Naive thymus-derived CD4-positive, alpha-beta T cell (primary cell): ENCODE measurements at regions of chr6 and their contacts with region 1.

Region 1: DNA sequence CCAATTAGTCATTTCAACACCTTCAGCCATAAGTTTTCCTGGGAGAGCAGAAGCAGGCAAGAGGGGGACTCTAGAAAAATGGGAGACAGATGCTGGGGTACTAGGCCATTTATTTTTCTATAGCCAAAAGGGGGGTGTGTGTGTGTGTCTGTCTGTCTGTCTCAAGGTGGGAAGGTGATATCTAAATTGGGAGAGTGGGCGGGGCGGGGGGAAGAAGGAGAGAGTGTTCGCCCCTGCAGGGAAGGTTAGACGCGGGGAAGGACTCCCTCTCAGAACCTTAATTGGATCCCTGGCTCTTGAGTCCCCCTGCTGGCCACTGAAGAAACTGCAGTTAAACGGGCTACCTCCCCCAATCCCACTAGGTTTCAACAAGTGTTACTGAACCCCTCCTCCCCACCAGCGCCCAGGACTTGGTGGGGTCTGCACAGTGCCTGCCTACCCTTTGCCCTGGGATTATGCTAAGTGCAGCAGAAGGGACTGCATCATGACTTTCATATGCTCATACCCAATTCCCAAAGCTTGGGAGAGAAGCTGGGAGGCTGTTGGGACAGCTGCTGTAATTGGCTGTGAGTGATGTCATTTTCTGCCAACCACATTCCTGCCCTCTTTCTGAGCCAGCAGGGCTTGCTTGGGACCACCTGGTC is 45.8 kb downstream of the FOXP4 start:
- DNase-seq: peak; percentile 48 to 79 (median 71)
- ATAC-seq: peak; percentile 81
- H3K4me3 ChIP-seq: no peak overlapping the region
- H3K4me3 Mint-ChIP-seq: no peak overlapping the region
- H3K27ac ChIP-seq: no peak overlapping the region
- H3K27ac Mint-ChIP-seq: no peak overlapping the region
- H3K4me1 ChIP-seq: peaks cover 0 to 5% of the 10 kb centered on the region in 2 donors
- H3K4me1 Mint-ChIP-seq: peaks cover 0 to 4% (median 0%) of the 10 kb centered on the region in 7 donors
- H3K27me3 ChIP-seq: no peaks in the 10 kb centered on the region
- H3K27me3 Mint-ChIP-seq: no peaks in the 10 kb centered on the region

Region 2: DNA sequence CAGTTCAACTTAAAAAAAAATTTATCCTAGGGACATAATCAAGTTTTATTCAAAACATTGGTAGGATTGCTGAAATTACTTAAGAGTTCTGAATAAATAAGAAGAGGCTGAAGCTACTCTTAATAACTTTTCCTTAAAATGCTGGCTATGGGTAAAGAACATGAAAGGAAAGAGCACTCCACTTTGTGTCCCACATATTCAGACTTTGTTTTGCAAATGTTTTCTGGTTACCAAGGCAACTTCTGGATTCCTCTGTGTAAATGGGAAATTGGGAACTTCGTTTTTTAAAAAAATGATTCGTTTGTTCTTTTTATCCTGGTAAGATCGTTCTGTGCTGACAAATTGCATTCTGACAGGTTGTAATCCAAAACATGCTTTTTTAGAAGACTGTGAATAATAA is 1981.8 kb before region 1 on chr6:
- CTCF ChIA-PET with region 1: no interaction called
- POLR2A ChIA-PET with region 1: no interaction called
- intact Hi-C with region 1: no loop called
- DNase-seq: no peak
- ATAC-seq: no peak
- H3K4me3 ChIP-seq: no peak overlapping the region
- H3K4me3 Mint-ChIP-seq: no peak overlapping the region
- H3K27ac ChIP-seq: no peak overlapping the region
- H3K27ac Mint-ChIP-seq: no peak overlapping the region
- H3K4me1 ChIP-seq: no peaks in the 10 kb centered on the region
- H3K4me1 Mint-ChIP-seq: no peaks in the 10 kb centered on the region
- H3K27me3 ChIP-seq: no peaks in the 10 kb centered on the region
- H3K27me3 Mint-ChIP-seq: peaks cover 10 to 23% (median 20%) of the 10 kb centered on the region in 5 donors

Region 3: GRCh38 chr6:41306187-41306854 is 285.7 kb before region 1 on chr6:
- CTCF ChIA-PET with region 1: no interaction called
- POLR2A ChIA-PET with region 1: no interaction called
- intact Hi-C with region 1: loop called in 1 of 2 experiments (anchors 2 kb)
- DNase-seq: peak in 7 of 9 donors; percentile 20 to 53 (median 35)
- ATAC-seq: no peak
- H3K4me3 ChIP-seq: no peak overlapping the region
- H3K4me3 Mint-ChIP-seq: no peak overlapping the region
- H3K27ac ChIP-seq: no peak overlapping the region
- H3K27ac Mint-ChIP-seq: no peak overlapping the region
- H3K4me1 ChIP-seq: no peaks in the 10 kb centered on the region
- H3K4me1 Mint-ChIP-seq: peaks cover 7 to 28% (median 20%) of the 10 kb centered on the region in 7 donors
- H3K27me3 ChIP-seq: no peaks in the 10 kb centered on the region
- H3K27me3 Mint-ChIP-seq: peaks cover 0 to 45% (median 0%) of the 10 kb centered on the region in 5 donors

Region 4: GRCh38 chr6:41424370-41425058 is 167.5 kb before region 1 on chr6:
- CTCF ChIA-PET with region 1: interaction called, 36 read pairs
- POLR2A ChIA-PET with region 1: no interaction called
- intact Hi-C with region 1: loop called in 1 of 2 experiments (anchors 1 kb)
- DNase-seq: peak; percentile 47 to 81 (median 67)
- ATAC-seq: peak; percentile 77
- H3K4me3 ChIP-seq: no peak overlapping the region
- H3K4me3 Mint-ChIP-seq: no peak overlapping the region
- H3K27ac ChIP-seq: no peak overlapping the region
- H3K27ac Mint-ChIP-seq: no peak overlapping the region
- H3K4me1 ChIP-seq: peaks cover 0 to 25% of the 10 kb centered on the region in 2 donors
- H3K4me1 Mint-ChIP-seq: peaks cover 6 to 10% (median 9%) of the 10 kb centered on the region in 7 donors
- H3K27me3 ChIP-seq: peaks cover 6 to 21% of the 10 kb centered on the region in 2 donors
- H3K27me3 Mint-ChIP-seq: peaks cover 15 to 33% (median 22%) of the 10 kb centered on the region in 5 donors

Region 5: GRCh38 chr6:41463062-41463930 is 128.7 kb before region 1 on chr6:
- CTCF ChIA-PET with region 1: interaction called, 3 read pairs
- POLR2A ChIA-PET with region 1: no interaction called
- intact Hi-C with region 1: loop called (anchors 1 kb)
- DNase-seq: no peak
- ATAC-seq: no peak
- H3K4me3 ChIP-seq: no peak overlapping the region
- H3K4me3 Mint-ChIP-seq: no peak overlapping the region
- H3K27ac ChIP-seq: no peak overlapping the region
- H3K27ac Mint-ChIP-seq: no peak overlapping the region
- H3K4me1 ChIP-seq: no peaks in the 10 kb centered on the region
- H3K4me1 Mint-ChIP-seq: peaks cover 0 to 4% (median 0%) of the 10 kb centered on the region in 7 donors
- H3K27me3 ChIP-seq: peaks cover 4 to 5% of the 10 kb centered on the region in 2 donors
- H3K27me3 Mint-ChIP-seq: peaks cover 38 to 63% (median 54%) of the 10 kb centered on the region in 5 donors

Region 6: DNA sequence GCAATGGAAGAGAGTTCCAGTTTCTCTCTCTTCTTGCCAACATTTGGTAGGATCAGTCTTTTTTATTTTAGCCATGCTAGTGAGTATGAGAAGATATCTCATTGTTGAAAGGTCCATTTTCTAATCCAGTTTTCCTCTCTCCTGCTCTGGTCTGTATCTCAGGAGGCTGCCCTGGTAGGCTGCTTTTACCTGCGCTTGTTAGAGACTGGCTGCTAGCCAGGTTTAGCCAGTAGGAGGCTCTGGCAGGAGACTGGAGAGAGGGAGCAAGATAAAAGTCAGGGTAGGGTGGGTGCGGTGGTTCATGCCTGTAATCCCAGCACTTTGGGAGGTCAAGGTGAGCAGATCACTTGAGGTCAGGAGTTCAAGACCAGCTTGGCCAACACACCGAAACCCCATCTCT is 114.4 kb before region 1 on chr6:
- CTCF ChIA-PET with region 1: no interaction called
- POLR2A ChIA-PET with region 1: no interaction called
- intact Hi-C with region 1: no loop called
- DNase-seq: no peak
- ATAC-seq: no peak
- H3K4me3 ChIP-seq: no peak overlapping the region
- H3K4me3 Mint-ChIP-seq: no peak overlapping the region
- H3K27ac ChIP-seq: no peak overlapping the region
- H3K27ac Mint-ChIP-seq: no peak overlapping the region
- H3K4me1 ChIP-seq: no peaks in the 10 kb centered on the region
- H3K4me1 Mint-ChIP-seq: peaks cover 0 to 7% (median 6%) of the 10 kb centered on the region in 7 donors
- H3K27me3 ChIP-seq: peaks cover 0 to 3% of the 10 kb centered on the region in 2 donors
- H3K27me3 Mint-ChIP-seq: peaks cover 24 to 64% (median 35%) of the 10 kb centered on the region in 5 donors

Region 7: DNA sequence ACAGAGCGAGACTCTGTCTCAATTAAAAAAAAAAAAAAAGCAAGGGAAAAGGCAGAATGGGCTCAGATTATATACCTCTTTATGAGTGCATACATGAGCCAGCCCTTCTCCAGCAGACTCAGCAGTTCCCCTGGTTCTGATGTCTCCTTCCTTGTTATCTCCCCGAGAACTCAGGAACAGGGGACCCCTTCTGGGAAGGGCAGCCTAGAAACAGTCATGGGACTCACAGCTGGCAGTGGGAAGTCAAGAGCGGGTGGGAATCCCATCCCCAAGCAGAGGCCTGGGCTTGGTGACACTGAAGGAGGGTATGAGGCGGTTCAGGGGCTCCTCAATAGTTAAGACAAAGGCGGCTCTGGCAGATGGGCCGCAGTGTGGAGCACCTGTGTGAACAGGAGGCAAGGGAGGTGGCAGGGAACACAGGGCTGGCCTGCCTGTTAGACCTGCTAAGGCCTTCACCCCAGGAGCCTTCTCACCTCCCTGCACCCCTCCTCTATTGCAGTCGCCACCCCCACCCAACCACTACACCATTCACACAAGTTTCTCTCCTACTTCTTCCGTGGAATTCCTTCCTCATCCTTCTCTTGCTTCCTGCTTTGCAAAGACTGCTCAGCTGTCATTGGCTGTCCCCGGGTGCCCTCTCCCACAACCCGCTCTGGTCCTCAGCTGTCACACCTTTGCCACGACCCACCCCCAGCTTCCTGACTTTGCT is 16.6 kb after region 1 on chr6:
- CTCF ChIA-PET with region 1: no interaction called
- POLR2A ChIA-PET with region 1: no interaction called
- intact Hi-C with region 1: no loop called
- DNase-seq: no peak
- ATAC-seq: no peak
- H3K4me3 ChIP-seq: no peak overlapping the region
- H3K4me3 Mint-ChIP-seq: no peak overlapping the region
- H3K27ac ChIP-seq: no peak overlapping the region
- H3K27ac Mint-ChIP-seq: no peak overlapping the region
- H3K4me1 ChIP-seq: no peaks in the 10 kb centered on the region
- H3K4me1 Mint-ChIP-seq: peaks cover 0 to under 1% (median 0%) of the 10 kb centered on the region in 7 donors
- H3K27me3 ChIP-seq: no peaks in the 10 kb centered on the region
- H3K27me3 Mint-ChIP-seq: peaks cover 0 to 12% (median 6%) of the 10 kb centered on the region in 5 donors